ENCODE measurements at regions of chr16 and their contacts with region 1.

Region 1: DNA sequence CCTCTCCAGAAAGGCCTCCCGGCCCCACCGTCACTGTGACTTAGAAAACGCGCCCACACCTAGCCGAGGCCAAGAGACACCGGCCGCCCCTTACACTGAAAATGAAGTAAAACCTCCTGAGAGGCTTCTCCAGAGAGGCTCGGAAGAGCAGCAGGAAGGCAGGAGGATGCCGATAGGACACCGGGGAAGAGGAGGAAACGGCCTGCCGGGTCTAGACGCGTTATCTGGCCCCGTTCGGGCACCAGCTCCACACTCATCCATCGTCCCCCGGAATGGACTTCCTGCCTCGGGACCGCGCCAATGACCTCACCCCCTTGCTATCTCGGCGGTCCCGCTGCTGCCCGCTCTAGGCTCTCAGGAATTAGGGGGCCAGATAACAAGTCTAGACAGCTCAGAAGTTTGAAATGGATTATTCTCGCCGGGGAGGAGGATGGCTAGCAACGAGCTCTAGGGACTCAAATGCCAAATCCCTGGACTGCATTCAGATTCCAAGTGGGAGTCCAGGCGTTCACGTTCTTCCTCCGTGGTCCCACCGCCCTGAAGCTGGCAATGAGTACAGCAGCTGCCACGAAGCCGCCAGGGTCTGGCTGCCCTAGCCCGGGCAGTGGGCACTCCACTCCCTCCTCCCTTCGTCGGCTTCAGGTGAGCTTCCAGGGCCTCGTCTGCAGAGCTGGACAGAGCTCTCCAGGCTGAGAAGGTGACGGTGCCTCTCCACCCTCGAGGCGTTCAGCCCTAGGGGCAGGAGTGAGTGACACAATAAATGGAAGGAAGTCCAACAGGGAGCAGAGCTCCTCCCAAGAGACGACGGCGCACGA is 350.9 kb downstream of the FOXL1 start:
- DNase-seq: no peak
- ATAC-seq: no peak
- H3K4me3 Mint-ChIP-seq: no peak overlapping the region
- H3K27ac Mint-ChIP-seq: no peak overlapping the region
- H3K4me1 Mint-ChIP-seq: peaks cover 1% of the 10 kb centered on the region
- H3K27me3 Mint-ChIP-seq: peaks cover 46% of the 10 kb centered on the region
- CTCF ChIP-seq: no peak

Region 2: GRCh38 chr16:86984991-86985647 is 55.9 kb after region 1 on chr16:
- CTCF ChIA-PET with region 1: no interaction called
- POLR2A ChIA-PET with region 1: no interaction called
- intact Hi-C with region 1: loop called (anchors 10 kb)
- DNase-seq: no peak
- ATAC-seq: no peak
- H3K4me3 Mint-ChIP-seq: no peak overlapping the region
- H3K27ac Mint-ChIP-seq: no peak overlapping the region
- H3K4me1 Mint-ChIP-seq: no peaks in the 10 kb centered on the region
- H3K27me3 Mint-ChIP-seq: peaks cover 1% of the 10 kb centered on the region
- CTCF ChIP-seq: no peak

Region 3: GRCh38 chr16:87317750-87318644 is 388.7 kb after region 1 on chr16:
- CTCF ChIA-PET with region 1: no interaction called
- POLR2A ChIA-PET with region 1: no interaction called
- intact Hi-C with region 1: no loop called
- DNase-seq: peak; percentile 68
- ATAC-seq: peak; percentile 51
- H3K4me3 Mint-ChIP-seq: peak overlapping the region; percentile 91
- H3K27ac Mint-ChIP-seq: peak overlapping the region; percentile 95
- H3K4me1 Mint-ChIP-seq: peaks cover 13% of the 10 kb centered on the region
- H3K27me3 Mint-ChIP-seq: no peaks in the 10 kb centered on the region
- CTCF ChIP-seq: no peak